CD14-positive monocyte (primary cell): ENCODE measurements at regions of chr5 and their contacts with region 1.

Region 1: DNA sequence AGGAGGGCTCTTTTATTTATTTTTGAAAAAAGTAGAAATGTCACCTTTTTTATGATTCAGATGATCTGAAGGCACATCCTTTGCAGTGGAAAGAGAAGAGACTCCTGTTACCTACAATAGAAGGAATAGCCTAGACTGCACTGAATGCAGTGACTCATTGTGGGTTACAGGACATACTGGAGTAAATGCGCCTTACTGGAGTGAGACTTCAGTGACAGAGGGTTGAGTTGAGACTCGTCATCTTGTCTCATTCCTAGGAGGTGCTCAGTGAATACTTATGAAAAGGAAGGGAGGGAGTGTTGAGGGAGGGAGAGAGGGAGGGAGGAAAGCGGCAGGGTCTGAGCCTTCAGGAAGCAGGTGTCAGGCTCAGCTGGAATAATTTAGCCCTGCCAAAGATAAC is 25.2 kb downstream of the ANKRA2 start:
- DNase-seq: no peak
- H3K4me3 ChIP-seq: no peak overlapping the region
- H3K4me3 Mint-ChIP-seq: no peak overlapping the region
- H3K27ac ChIP-seq: no peak overlapping the region
- H3K27ac Mint-ChIP-seq: no peak overlapping the region
- H3K4me1 ChIP-seq: no peaks in the 10 kb centered on the region
- H3K4me1 Mint-ChIP-seq: peaks cover 2% of the 10 kb centered on the region
- H3K27me3 ChIP-seq: peaks cover 0 to 3% of the 10 kb centered on the region in 2 donors
- H3K27me3 Mint-ChIP-seq: peaks cover 15 to 27% (median 19%) of the 10 kb centered on the region in 3 donors
- CTCF ChIP-seq: no peak

Region 2: GRCh38 chr5:72785801-72786200 is 754.4 kb before region 1 on chr5:
- intact Hi-C with region 1: no loop called
- DNase-seq: no peak
- H3K4me3 ChIP-seq: no peak overlapping the region
- H3K4me3 Mint-ChIP-seq: no peak overlapping the region
- H3K27ac ChIP-seq: no peak overlapping the region
- H3K27ac Mint-ChIP-seq: no peak overlapping the region
- H3K4me1 ChIP-seq: no peaks in the 10 kb centered on the region
- H3K4me1 Mint-ChIP-seq: no peaks in the 10 kb centered on the region
- H3K27me3 ChIP-seq: no peaks in the 10 kb centered on the region
- H3K27me3 Mint-ChIP-seq: peaks cover 0 to 2% (median 0%) of the 10 kb centered on the region in 3 donors
- CTCF ChIP-seq: no peak

Region 3: GRCh38 chr5:73519531-73520283 is 20.5 kb before region 1 on chr5:
- intact Hi-C with region 1: loop called in 1 of 2 experiments (anchors 2 kb)
- DNase-seq: peak; percentile 48 to 61 (median 58)
- H3K4me3 ChIP-seq: no peak overlapping the region
- H3K4me3 Mint-ChIP-seq: no peak overlapping the region
- H3K27ac ChIP-seq: no peak overlapping the region
- H3K27ac Mint-ChIP-seq: no peak overlapping the region
- H3K4me1 ChIP-seq: no peaks in the 10 kb centered on the region
- H3K4me1 Mint-ChIP-seq: peaks cover 9% of the 10 kb centered on the region
- H3K27me3 ChIP-seq: no peaks in the 10 kb centered on the region
- H3K27me3 Mint-ChIP-seq: peaks cover 0 to 1% (median 1%) of the 10 kb centered on the region in 3 donors
- CTCF ChIP-seq: peak; percentile 67